ENCODE measurements at regions of chr19 and their contacts with region 1.

Region 1: DNA sequence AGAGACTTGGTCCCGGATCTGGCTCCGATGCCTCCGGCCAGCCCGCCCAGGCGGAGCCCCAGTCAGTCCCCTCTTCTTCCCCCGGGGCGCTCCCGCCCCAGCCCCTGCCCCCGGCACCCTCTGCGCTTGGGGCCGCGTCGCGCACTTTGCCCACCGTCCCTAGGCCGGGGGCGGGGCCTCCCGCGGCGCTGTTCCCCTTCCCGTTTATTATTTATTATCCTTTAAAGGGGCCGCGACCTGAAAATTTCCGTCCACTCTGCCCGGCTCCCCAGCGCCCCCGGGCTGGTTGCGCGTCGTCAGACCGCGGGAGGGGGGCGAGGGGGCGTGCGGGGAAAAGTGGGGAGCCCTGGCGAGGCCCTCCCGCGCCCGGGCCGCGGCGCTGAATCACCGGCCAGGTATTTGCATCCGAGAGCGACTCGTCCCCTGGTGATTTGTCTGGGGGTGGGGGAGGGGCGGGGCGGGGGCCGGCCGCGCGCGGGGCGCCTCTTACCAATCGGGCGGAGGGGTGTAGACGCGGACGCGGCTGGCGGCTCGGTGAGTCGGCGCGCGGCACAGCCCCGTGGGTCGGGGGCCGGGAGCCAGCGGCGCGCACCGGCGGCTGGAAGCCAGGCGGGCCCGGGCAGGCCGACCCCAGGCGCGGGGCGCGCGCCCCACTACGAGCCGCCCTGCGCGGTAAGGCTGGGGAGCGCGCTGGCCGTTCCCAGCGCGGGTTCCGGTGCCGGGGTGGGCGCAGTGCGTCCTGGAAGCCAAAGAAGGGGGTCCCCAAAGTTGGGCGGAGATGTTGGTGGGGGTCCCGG is at the start of gene ARID3A:
- DNase-seq: peak; percentile 88
- ATAC-seq: peak; percentile 72
- total RNA-seq, gene ARID3A: 13.6 TPM

Region 2: DNA sequence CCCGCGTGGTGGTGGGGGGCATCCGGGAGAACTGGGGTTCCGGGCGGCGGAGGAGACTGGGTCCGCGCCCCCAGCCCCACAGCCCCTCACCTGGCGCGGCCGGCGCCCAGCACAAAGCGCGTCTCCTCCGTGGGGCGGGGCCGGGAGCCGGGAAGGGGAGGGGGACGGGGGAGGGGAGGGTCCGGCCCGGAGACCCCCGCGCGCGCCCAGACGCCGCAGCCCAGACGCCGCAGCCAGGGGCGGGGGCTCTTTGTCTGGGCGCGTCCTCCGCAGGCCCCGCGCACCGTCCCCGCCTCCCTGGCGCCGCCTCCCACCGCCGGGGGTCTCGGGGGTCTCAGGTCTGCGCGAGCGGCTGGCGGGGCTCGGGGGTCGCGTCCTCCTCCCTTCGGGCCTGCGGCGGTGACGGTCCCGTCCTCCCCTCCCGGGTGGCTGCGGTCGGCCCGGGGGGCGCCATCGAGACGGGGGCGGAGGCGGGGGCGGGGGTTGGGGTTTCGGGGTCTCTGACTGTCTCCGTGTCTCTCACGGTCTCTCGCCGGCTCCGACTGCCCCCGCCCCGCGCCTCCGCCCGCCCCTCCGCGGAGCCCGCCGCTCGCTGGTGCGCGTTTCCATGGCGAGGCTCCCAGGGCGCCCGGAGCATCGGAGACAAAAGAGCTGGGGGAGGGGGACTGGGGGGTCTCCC is 103.8 kb before region 1 on chr19 and contains the start of gene PLPPR3:
- intact Hi-C with region 1: no loop called
- DNase-seq: no peak
- ATAC-seq: no peak
- total RNA-seq, gene PLPPR3: not detected

Region 3: DNA sequence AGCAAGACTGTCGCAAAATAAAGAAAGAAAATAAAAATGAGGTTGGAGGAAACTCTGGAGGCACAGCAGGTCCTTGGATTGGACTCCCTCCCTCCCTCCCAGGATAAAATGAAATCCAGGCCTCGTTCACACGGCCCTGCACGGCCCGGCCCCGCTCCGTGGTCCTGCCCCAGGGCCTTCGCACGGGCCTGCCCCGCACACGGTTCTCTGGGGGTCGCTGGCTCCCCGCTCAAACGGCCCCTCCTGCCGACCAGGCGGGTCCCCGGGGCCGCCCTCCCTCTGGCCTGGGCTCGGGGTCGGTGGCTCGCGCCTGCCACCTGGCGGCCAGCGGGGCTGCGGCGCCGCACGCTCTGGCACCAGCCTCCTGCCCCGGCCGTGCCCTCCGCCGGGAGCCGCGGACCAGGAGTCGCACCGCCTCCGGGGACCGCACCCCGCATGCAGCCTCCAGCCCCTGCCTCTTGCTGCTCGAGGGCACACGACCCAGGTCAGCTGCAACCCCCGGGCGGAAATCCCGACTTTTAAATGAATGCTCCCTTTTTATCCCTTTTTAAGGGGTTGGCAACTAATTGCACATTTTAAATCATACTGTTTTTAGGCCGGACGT is 56.9 kb after region 1 on chr19:
- intact Hi-C with region 1: loop called (anchors 2 kb)
- DNase-seq: peak; percentile 82
- ATAC-seq: peak; percentile 66

Measured in sciatic nerve (tissue), 2 donors.